MCF 10A (cell line): ENCODE measurements at regions of chr19 and their contacts with region 1.

Region 1: DNA sequence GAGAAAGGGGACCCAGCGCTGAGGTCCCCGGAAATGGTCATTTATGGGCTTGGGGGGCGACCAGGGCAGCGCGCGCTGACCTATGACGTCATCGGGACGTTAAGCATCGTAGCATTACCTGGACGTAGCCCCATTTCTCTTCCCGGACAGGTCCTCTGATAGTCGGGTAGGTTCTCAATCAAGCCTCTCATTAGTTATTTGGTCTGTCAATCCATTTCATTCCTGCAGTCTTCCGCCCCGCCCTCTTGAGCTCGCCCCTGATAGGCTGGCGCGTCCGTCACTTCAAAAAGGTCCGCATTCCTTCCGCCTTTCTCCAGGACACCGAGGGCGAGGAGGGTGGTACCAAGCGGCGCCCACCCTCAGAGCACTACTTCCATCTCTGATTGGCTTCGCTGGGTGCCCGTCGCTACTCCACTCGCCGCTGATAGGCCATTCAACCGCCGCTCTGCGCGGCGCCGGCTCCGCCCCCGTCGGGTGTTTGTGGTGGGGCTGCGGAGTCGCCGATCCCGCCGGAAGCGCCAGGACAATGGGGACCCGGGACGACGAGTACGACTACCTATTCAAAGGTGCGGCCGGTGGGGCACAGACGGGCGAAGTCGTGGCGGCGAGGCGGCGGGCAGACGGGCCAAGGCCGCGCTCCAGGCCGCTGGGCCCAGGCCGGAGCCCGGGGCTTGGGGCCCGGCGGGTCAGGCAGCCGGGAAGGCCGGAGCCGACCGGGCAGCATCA is at the start of gene RAB11B:
- DNase-seq: peak; percentile 100
- H3K4me3 Mint-ChIP-seq: peak within 1 kb of the TSS; percentile 91
- H3K27ac Mint-ChIP-seq: peak within 1 kb of the TSS; percentile 96
- H3K4me1 Mint-ChIP-seq: peaks cover 13% of the 10 kb centered on the region
- H3K27me3 Mint-ChIP-seq: no peaks in the 10 kb centered on the region
- CTCF ChIP-seq: no peak
- total RNA-seq, gene RAB11B: 67.2 and 73.3 TPM in 2 replicates

Region 2: DNA sequence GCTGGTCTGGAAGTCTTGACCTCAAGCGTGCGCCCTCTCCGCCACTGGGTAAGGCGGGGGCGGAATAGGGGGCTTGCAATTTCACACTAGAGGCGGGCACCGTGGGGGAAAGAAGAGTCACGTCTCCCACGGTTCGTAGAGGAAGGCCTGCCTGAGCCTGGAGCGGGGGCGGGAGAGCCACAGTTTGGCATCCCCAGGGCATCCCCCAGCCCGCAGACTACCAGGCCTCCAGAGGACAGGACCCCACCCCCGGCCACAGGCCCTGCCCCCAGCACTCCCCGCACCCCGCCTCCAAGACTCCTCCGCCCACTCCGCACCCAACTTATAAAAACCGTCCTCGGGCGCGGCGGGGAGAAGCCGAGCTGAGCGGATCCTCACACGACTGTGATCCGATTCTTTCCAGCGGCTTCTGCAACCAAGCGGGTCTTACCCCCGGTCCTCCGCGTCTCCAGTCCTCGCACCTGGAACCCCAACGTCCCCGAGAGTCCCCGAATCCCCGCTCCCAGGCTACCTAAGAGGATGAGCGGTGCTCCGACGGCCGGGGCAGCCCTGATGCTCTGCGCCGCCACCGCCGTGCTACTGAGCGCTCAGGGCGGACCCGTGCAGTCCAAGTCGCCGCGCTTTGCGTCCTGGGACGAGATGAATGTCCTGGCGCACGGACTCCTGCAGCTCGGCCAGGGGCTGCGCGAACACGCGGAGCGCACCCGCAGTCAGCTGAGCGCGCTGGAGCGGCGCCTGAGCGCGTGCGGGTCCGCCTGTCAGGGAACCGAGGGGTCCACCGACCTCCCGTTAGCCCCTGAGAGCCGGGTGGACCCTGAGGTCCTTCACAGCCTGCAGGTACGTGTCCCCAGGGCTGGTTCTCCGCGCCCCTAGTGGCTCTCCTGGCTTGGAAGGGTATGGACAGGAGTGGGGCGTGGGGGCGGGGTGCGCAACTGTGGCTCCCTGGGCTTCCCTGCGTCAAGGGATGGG is 26.0 kb before region 1 on chr19 and contains the start of gene ANGPTL4:
- CTCF ChIA-PET with region 1: interaction called, 5 read pairs
- POLR2A ChIA-PET with region 1: interaction called, 31 read pairs
- intact Hi-C with region 1: loop called (anchors 2 kb)
- DNase-seq: peak; percentile 89
- H3K4me3 Mint-ChIP-seq: peak within 1 kb of the TSS; percentile 73
- H3K27ac Mint-ChIP-seq: peak within 1 kb of the TSS; percentile 94
- H3K4me1 Mint-ChIP-seq: peaks cover 34% of the 10 kb centered on the region
- H3K27me3 Mint-ChIP-seq: no peaks in the 10 kb centered on the region
- CTCF ChIP-seq: no peak
- total RNA-seq, gene ANGPTL4: 12.6 and 32.8 TPM in 2 replicates

Region 3: DNA sequence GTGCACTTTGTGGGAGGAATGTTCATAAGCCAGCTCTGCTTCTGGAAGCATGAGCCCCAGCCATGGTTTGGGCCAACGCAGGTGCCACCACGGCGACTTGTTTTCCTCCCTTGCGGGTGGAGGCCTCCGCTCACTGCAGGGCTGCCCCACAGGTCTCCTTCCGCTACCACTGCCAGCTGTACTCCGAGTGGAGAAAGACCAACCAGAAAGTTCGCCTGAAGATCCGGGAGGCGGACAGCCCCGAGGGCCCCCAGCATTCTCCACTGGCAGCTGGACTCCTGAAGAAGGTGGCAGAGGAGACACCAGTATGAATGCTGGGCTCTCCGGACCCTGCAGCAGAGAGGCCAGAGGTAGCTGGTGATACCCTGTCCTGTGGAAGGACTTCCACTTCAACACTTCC is 48.2 kb after region 1 on chr19:
- CTCF ChIA-PET with region 1: no interaction called
- POLR2A ChIA-PET with region 1: no interaction called
- intact Hi-C with region 1: no loop called
- DNase-seq: no peak
- H3K4me3 Mint-ChIP-seq: no peak overlapping the region
- H3K27ac Mint-ChIP-seq: no peak overlapping the region
- H3K4me1 Mint-ChIP-seq: no peaks in the 10 kb centered on the region
- H3K27me3 Mint-ChIP-seq: no peaks in the 10 kb centered on the region
- CTCF ChIP-seq: no peak